Activated CD4-positive, alpha-beta T cell treated with anti-CD3 and anti-CD28 coated beads for 36 hours (primary cell): ENCODE measurements at regions of chr10 and their contacts with region 1.

Region 1: DNA sequence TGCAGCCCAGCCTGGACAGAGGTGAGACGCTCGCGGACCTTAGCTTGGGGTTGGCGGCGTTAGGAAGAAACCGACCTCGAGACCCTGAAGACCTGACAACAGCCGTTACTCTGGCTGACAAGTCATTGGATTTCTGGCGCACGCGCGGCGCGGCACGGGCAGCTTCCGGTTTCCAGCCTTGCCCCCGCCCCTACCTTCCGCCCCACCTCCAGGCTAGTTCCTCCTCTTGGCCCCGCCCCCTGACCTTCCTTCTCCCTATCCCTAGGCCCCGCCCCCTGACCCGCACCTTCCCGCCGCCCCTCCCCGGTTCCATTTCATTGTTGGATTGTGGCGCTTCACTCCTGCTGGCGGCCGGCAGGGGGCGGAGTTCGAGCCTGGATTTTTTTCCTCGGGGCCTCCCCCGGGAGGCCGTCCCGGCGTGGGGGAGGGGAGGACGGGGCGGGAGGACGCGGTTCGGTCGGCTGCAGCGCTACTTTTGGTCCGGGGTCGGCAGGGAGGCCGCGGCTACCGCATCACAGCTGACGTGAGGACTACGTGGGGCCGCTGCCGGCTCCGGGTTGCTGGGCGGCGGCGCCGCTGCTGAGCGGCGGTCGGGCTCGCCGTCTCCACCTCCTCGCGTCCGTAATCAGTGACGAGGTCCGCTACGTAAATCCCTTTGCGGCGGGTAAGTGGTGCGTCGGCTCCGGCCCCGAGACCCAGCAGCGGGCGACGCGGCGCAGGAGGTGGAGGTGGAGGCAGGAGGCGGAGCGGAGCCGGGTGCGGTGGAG is at the start of gene CREM:
- DNase-seq: peak; percentile 100
- ATAC-seq: peak; percentile 83
- H3K4me3 Mint-ChIP-seq: peak within 1 kb of the TSS; percentile 86
- H3K27ac Mint-ChIP-seq: peak within 1 kb of the TSS; percentile 99
- H3K4me1 Mint-ChIP-seq: peaks cover 57% of the 10 kb centered on the region
- H3K27me3 Mint-ChIP-seq: no peaks in the 10 kb centered on the region
- total RNA-seq, gene CREM: 106 to 126 TPM

Region 2: GRCh38 chr10:34479520-34480179 is 647.1 kb before region 1 on chr10:
- CTCF ChIA-PET with region 1: no interaction called
- POLR2A ChIA-PET with region 1: no interaction called
- intact Hi-C with region 1: no loop called
- DNase-seq: no peak
- ATAC-seq: no peak
- H3K4me3 Mint-ChIP-seq: no peak overlapping the region
- H3K27ac Mint-ChIP-seq: no peak overlapping the region
- H3K4me1 Mint-ChIP-seq: no peaks in the 10 kb centered on the region
- H3K27me3 Mint-ChIP-seq: peaks cover 2% of the 10 kb centered on the region

Region 3: GRCh38 chr10:34994565-34995142 is 132.1 kb before region 1 on chr10:
- CTCF ChIA-PET with region 1: no interaction called
- POLR2A ChIA-PET with region 1: no interaction called
- intact Hi-C with region 1: no loop called
- DNase-seq: peak; percentile 71
- ATAC-seq: peak; percentile 95
- H3K4me3 Mint-ChIP-seq: no peak overlapping the region
- H3K27ac Mint-ChIP-seq: peak overlapping the region; percentile 47
- H3K4me1 Mint-ChIP-seq: peaks cover 16% of the 10 kb centered on the region
- H3K27me3 Mint-ChIP-seq: no peaks in the 10 kb centered on the region

Region 4: GRCh38 chr10:35090162-35090954 is 36.4 kb before region 1 on chr10 and contains the start of gene CUL2:
- CTCF ChIA-PET with region 1: interaction called, 3 read pairs
- POLR2A ChIA-PET with region 1: interaction called, 3 read pairs
- intact Hi-C with region 1: loop called (anchors 1 to 2 kb)
- DNase-seq: peak; percentile 94
- ATAC-seq: peak; percentile 96
- H3K4me3 Mint-ChIP-seq: peak within 1 kb of the TSS; percentile 93
- H3K27ac Mint-ChIP-seq: peak within 1 kb of the TSS; percentile 96
- H3K4me1 Mint-ChIP-seq: peaks cover 45% of the 10 kb centered on the region
- H3K27me3 Mint-ChIP-seq: no peaks in the 10 kb centered on the region
- total RNA-seq, gene CUL2: 42.7 to 45.3 TPM

Region 5: GRCh38 chr10:35218339-35218955 is 91.7 kb after region 1 on chr10:
- CTCF ChIA-PET with region 1: interaction called, 102 read pairs
- POLR2A ChIA-PET with region 1: interaction called, 5 read pairs
- intact Hi-C with region 1: loop called (anchors 1 kb)
- DNase-seq: peak; percentile 94
- ATAC-seq: peak; percentile 83
- H3K4me3 Mint-ChIP-seq: peak overlapping the region; percentile 47
- H3K27ac Mint-ChIP-seq: peak overlapping the region; percentile 96
- H3K4me1 Mint-ChIP-seq: peaks cover 52% of the 10 kb centered on the region
- H3K27me3 Mint-ChIP-seq: peaks cover 2% of the 10 kb centered on the region

Region 6: DNA sequence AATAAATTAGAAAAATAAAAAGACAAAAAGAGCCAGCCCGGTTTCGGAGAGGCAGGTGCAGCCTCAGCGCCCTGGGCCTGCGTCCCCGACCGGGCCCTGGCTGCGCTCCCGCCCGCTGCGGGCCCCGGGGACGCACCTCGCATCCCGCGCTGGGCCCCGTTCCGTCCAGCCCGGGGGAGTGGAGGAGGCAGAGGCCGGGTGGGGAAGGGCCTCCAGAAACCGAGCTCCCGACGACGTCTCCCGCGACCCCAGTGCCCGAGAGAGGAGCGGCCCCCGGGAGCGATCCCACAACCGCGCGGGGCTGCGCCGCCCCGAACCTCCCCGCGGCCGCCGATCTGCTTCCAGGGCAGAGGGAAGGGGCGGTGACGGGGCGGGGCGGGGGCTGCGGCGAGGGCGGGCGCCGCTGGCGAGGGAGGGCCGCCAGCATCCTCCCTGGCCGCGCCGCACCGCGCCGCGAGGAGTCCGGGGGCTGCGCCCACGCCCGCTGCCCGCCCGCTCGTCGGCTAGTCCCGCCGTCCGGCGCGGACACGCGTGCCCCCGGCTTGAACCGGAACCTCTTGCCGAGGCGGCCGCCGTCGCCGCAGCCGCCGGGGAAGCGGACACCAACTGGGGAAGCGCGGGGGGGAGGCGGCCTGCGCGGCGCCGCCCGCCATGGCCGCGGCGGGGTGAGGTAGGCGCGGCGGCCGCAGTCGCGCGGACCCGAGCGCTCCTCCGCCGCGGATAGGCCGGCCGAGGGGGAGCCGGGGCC is 209.5 kb after region 1 on chr10 and contains the start of gene CCNY:
- CTCF ChIA-PET with region 1: interaction called, 4 read pairs
- POLR2A ChIA-PET with region 1: interaction called, 10 read pairs
- intact Hi-C with region 1: loop called (anchors 1 to 2 kb)
- DNase-seq: peak; percentile 90
- ATAC-seq: peak; percentile 59
- H3K4me3 Mint-ChIP-seq: peak within 1 kb of the TSS; percentile 89
- H3K27ac Mint-ChIP-seq: peak within 1 kb of the TSS; percentile 90
- H3K4me1 Mint-ChIP-seq: peaks cover 71% of the 10 kb centered on the region
- H3K27me3 Mint-ChIP-seq: no peaks in the 10 kb centered on the region
- total RNA-seq, gene CCNY: 49.4 to 54.0 TPM

Region 7: GRCh38 chr10:35442028-35442427 is 315.3 kb after region 1 on chr10:
- CTCF ChIA-PET with region 1: no interaction called
- POLR2A ChIA-PET with region 1: no interaction called
- intact Hi-C with region 1: loop called (anchors 2 to 10 kb)
- DNase-seq: peak; percentile 37
- ATAC-seq: peak; percentile 66
- H3K4me3 Mint-ChIP-seq: peak overlapping the region; percentile 18
- H3K27ac Mint-ChIP-seq: peak overlapping the region; percentile 83
- H3K4me1 Mint-ChIP-seq: peaks cover 51% of the 10 kb centered on the region
- H3K27me3 Mint-ChIP-seq: no peaks in the 10 kb centered on the region

Region 8: GRCh38 chr10:35563261-35563891 is 436.7 kb after region 1 on chr10:
- CTCF ChIA-PET with region 1: no interaction called
- POLR2A ChIA-PET with region 1: no interaction called
- intact Hi-C with region 1: loop called in 1 of 2 experiments (anchors 2 kb)
- DNase-seq: peak; percentile 72
- ATAC-seq: peak; percentile 51
- H3K4me3 Mint-ChIP-seq: no peak overlapping the region
- H3K27ac Mint-ChIP-seq: no peak overlapping the region
- H3K4me1 Mint-ChIP-seq: no peaks in the 10 kb centered on the region
- H3K27me3 Mint-ChIP-seq: no peaks in the 10 kb centered on the region